Caco-2 (cell line): ENCODE measurements at regions of chr13 and their contacts with region 1.

Region 1: GRCh38 chr13:52128714-52129700 is at the start of gene NEK5:
- DNase-seq: peak; percentile 72 to 92
- H3K4me3 ChIP-seq: peak within 1 kb of the TSS; percentile 88
- H3K4me3 Mint-ChIP-seq: peak within 1 kb of the TSS; percentile 74
- H3K27ac Mint-ChIP-seq: peak within 1 kb of the TSS; percentile 50
- H3K4me1 ChIP-seq: peaks cover 3% of the 10 kb centered on the region; the same call in 1 of the 2 replicates
- H3K4me1 Mint-ChIP-seq: peaks cover 9% of the 10 kb centered on the region
- H3K27me3 ChIP-seq: no peaks in the 10 kb centered on the region
- H3K27me3 Mint-ChIP-seq: no peaks in the 10 kb centered on the region
- CTCF ChIP-seq: peak; percentile 87 to 91
- total RNA-seq, gene NEK5: 0.35 and 0.39 TPM in 2 replicates

Region 2: GRCh38 chr13:51844862-51845573 is 284.0 kb before region 1 on chr13 and contains the start of gene TMEM272:
- CTCF ChIA-PET with region 1: no interaction called
- POLR2A ChIA-PET with region 1: no interaction called
- intact Hi-C with region 1: loop called (anchors 1 kb)
- DNase-seq: peak; percentile 71 to 83
- H3K4me3 ChIP-seq: no peak within 1 kb of the TSS
- H3K4me3 Mint-ChIP-seq: no peak within 1 kb of the TSS
- H3K27ac Mint-ChIP-seq: no peak within 1 kb of the TSS
- H3K4me1 ChIP-seq: no peaks in the 10 kb centered on the region
- H3K4me1 Mint-ChIP-seq: peaks cover 16% of the 10 kb centered on the region
- H3K27me3 ChIP-seq: no peaks in the 10 kb centered on the region
- H3K27me3 Mint-ChIP-seq: no peaks in the 10 kb centered on the region
- CTCF ChIP-seq: peak; percentile 89 to 92
- total RNA-seq, gene TMEM272: 0.14 and 0.23 TPM in 2 replicates

Region 3: GRCh38 chr13:51911860-51912510 is 217.0 kb before region 1 on chr13:
- CTCF ChIA-PET with region 1: interaction called, 23 read pairs
- POLR2A ChIA-PET with region 1: no interaction called
- intact Hi-C with region 1: loop called (anchors 1 kb)
- DNase-seq: peak; percentile 69 to 75
- H3K4me3 ChIP-seq: no peak overlapping the region
- H3K4me3 Mint-ChIP-seq: peak overlapping the region; percentile 13
- H3K27ac Mint-ChIP-seq: peak overlapping the region; percentile 21
- H3K4me1 ChIP-seq: peaks cover 18% of the 10 kb centered on the region
- H3K4me1 Mint-ChIP-seq: peaks cover 13% of the 10 kb centered on the region
- H3K27me3 ChIP-seq: no peaks in the 10 kb centered on the region
- H3K27me3 Mint-ChIP-seq: no peaks in the 10 kb centered on the region
- CTCF ChIP-seq: peak in 1 of 2 experiments; percentile 50

Region 4: DNA sequence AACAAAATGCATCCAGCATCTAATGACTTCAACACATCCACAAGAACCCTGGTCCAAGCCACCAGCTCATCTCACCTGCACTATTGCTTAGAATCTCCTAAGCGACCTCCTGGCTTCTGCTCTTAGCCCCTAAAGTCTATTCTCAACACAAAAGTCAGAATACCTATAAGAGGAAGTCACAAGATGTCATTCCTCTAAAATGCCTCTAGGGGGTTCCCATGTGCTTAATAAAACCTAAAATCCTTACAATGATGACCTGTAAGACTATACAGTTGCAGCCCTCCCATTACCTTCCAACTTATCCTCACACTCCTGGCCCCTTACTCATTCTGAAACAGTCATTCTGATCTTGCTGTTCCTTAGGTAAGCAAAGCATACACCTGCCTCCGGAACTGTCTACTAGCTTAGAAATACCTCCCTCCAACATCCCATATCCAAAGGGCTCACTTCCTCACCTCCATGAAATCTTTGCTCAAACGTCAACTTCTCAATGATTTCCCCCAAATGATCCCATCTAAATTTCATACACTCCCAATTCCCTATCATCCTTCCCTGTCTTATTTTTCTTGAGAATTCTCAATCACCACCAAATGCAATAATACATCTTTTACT is 127.8 kb before region 1 on chr13:
- CTCF ChIA-PET with region 1: interaction called, 36 read pairs
- POLR2A ChIA-PET with region 1: no interaction called
- intact Hi-C with region 1: loop called (anchors 1 kb)
- DNase-seq: no peak
- H3K4me3 ChIP-seq: no peak overlapping the region
- H3K4me3 Mint-ChIP-seq: no peak overlapping the region
- H3K27ac Mint-ChIP-seq: no peak overlapping the region
- H3K4me1 ChIP-seq: peaks cover 66% of the 10 kb centered on the region
- H3K4me1 Mint-ChIP-seq: peaks cover 58% of the 10 kb centered on the region
- H3K27me3 ChIP-seq: no peaks in the 10 kb centered on the region
- H3K27me3 Mint-ChIP-seq: no peaks in the 10 kb centered on the region
- CTCF ChIP-seq: peak; percentile 61 to 82